A549 (cell line): ENCODE measurements at regions of chr3 and their contacts with region 1.

Region 1: GRCh38 chr3:122555275-122556071 is 8.6 kb downstream of the PARP9 start:
- DNase-seq: no peak
- ATAC-seq: no peak
- H3K4me3 ChIP-seq: no peak overlapping the region
- H3K27ac ChIP-seq: no peak overlapping the region
- H3K4me1 ChIP-seq: no peaks in the 10 kb centered on the region
- CTCF ChIP-seq: no peak
- EP300 ChIP-seq: no peak
- POLR2A ChIP-seq: no peak
- RAD21 ChIP-seq: no peak

Region 2: DNA sequence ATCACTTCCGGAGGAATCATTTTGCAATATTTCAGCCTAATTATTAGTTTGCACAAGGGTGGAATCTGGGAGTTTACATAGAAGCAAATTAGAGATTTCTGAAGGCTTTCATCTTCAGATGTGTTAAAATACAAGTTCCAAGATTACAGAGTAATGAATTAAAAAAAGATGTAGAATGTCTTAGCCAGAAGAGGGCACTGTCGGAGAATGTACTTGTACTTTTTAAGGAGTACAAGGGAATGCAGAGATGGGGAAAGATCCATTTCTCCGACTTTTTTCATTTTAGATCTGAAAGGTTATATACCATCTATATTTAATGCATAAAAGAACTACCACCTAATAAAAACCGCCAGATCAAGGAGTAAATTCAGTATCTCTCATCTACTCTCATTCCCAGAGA is 96.5 kb before region 1 on chr3:
- CTCF ChIA-PET with region 1: interaction called, 11 read pairs
- POLR2A ChIA-PET with region 1: no interaction called
- DNase-seq: peak in 1 of 2 experiments; percentile 62
- ATAC-seq: peak in 1 of 2 experiments; percentile 84; a peak in 3 of 6 replicates
- H3K4me3 ChIP-seq: no peak overlapping the region
- H3K27ac ChIP-seq: no peak overlapping the region
- H3K4me1 ChIP-seq: peaks cover 13% of the 10 kb centered on the region; the same call in 2 of the 3 replicates
- CTCF ChIP-seq: peak; percentile 76
- EP300 ChIP-seq: no peak
- POLR2A ChIP-seq: no peak
- RAD21 ChIP-seq: peak; percentile 67 to 69

Region 3: GRCh38 chr3:122824465-122825381 is 269.2 kb after region 1 on chr3:
- CTCF ChIA-PET with region 1: no interaction called
- POLR2A ChIA-PET with region 1: no interaction called
- DNase-seq: no peak
- ATAC-seq: no peak
- H3K4me3 ChIP-seq: no peak overlapping the region
- H3K27ac ChIP-seq: no peak overlapping the region
- H3K4me1 ChIP-seq: no peaks in the 10 kb centered on the region
- CTCF ChIP-seq: no peak
- EP300 ChIP-seq: no peak
- POLR2A ChIP-seq: no peak
- RAD21 ChIP-seq: no peak